Activated T-helper 2 cell treated with anti-CD3 and anti-CD28 coated beads, Interferon-gamma antibody, Interleukin-2, Interleukin-4, amounts not matched to agents 10 μg/mL and 5 μg/mL and 100 μg/mL, durations not matched to agents 14 hours and 24 hours and 36 hours (primary cell): ENCODE measurements at regions of chr10 and their contacts with region 1.

Region 1: GRCh38 chr10:33008499-33009243 is 50.6 kb upstream of the ITGB1 start:
- DNase-seq: peak; percentile 45
- H3K4me3 Mint-ChIP-seq: peak overlapping the region; percentile 67
- H3K27ac Mint-ChIP-seq: peak overlapping the region; percentile 50
- H3K4me1 Mint-ChIP-seq: peaks cover 30% of the 10 kb centered on the region
- H3K27me3 Mint-ChIP-seq: peaks cover 1% of the 10 kb centered on the region

Region 2: DNA sequence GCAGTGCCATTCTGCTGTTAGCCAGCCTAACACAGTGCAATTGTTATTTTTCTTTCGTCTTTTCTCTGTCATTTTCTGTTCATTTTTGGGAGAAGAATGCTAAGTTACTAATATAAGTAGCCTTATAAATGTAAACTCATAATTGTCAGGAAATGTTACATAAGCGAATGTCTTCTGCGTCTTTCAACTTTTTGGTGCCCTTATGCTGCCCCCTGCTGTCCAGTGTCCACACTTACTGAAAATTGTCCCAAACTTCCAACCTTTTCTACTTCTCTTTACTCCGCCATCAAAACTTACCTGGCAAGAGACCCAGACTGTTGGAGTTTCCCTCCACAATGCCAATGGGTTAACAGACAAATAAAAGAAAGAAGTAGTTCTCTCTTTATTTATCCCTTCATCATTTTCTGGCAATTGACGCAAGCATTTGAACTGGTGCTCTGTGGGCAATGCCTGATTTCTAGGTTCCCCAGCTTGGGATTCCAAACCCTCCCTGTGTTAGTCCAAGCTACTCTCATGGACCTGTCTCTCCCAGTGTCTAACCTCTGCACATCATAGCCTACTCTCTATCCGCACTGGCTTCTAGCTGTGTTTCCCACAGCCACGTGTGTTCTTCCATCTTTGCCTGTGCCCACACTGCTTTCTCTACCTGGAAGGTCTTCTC is 640.7 kb before region 1 on chr10:
- intact Hi-C with region 1: loop called (anchors 5 kb)
- DNase-seq: peak; percentile 58
- H3K4me3 Mint-ChIP-seq: no peak overlapping the region
- H3K27ac Mint-ChIP-seq: no peak overlapping the region
- H3K4me1 Mint-ChIP-seq: peaks cover 22% of the 10 kb centered on the region
- H3K27me3 Mint-ChIP-seq: no peaks in the 10 kb centered on the region

Region 3: GRCh38 chr10:32795598-32796183 is 213.0 kb before region 1 on chr10:
- intact Hi-C with region 1: loop called (anchors 1 kb)
- DNase-seq: no peak
- H3K4me3 Mint-ChIP-seq: no peak overlapping the region
- H3K27ac Mint-ChIP-seq: no peak overlapping the region
- H3K4me1 Mint-ChIP-seq: no peaks in the 10 kb centered on the region
- H3K27me3 Mint-ChIP-seq: peaks cover 7% of the 10 kb centered on the region

Region 4: GRCh38 chr10:32958085-32959005 is 50.3 kb before region 1 on chr10 and contains the start of gene ITGB1:
- intact Hi-C with region 1: loop called (anchors 1 kb)
- DNase-seq: peak; percentile 79
- H3K4me3 Mint-ChIP-seq: peak within 1 kb of the TSS; percentile 81
- H3K27ac Mint-ChIP-seq: peak within 1 kb of the TSS; percentile 90
- H3K4me1 Mint-ChIP-seq: peaks cover 45% of the 10 kb centered on the region
- H3K27me3 Mint-ChIP-seq: no peaks in the 10 kb centered on the region
- total RNA-seq, gene ITGB1: 77.8 and 78.7 TPM in 2 replicates

Region 5: GRCh38 chr10:32980558-32981468 is 27.9 kb before region 1 on chr10:
- intact Hi-C with region 1: loop called (anchors 2 kb)
- DNase-seq: peak; percentile 77
- H3K4me3 Mint-ChIP-seq: peak overlapping the region; percentile 85
- H3K27ac Mint-ChIP-seq: peak overlapping the region; percentile 88
- H3K4me1 Mint-ChIP-seq: peaks cover 28% of the 10 kb centered on the region
- H3K27me3 Mint-ChIP-seq: peaks cover 3% of the 10 kb centered on the region

Region 6: GRCh38 chr10:33025039-33025438 is 16.4 kb after region 1 on chr10:
- intact Hi-C with region 1: no loop called
- DNase-seq: no peak
- H3K4me3 Mint-ChIP-seq: no peak overlapping the region
- H3K27ac Mint-ChIP-seq: no peak overlapping the region
- H3K4me1 Mint-ChIP-seq: peaks cover 4% of the 10 kb centered on the region
- H3K27me3 Mint-ChIP-seq: peaks cover 12% of the 10 kb centered on the region

Region 7: DNA sequence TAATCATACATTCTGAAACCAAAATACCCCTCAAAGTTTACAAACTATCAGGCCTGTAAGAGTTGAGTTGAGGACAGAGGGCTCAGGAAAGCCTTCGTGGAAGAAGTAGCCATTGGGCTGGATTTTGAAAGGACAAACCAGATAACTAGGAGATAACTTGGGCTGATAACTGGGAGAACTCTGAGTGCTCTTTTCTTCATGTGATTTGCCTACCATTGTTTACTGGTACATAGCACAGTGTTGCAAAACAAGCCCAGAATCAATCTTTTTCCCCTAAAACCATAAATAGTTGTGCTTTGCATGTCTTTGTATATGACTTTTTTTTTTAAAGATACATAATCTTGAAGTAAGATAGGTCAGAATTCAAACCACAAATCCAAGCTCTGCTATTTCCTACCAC is 56.0 kb after region 1 on chr10:
- intact Hi-C with region 1: no loop called
- DNase-seq: no peak
- H3K4me3 Mint-ChIP-seq: no peak overlapping the region
- H3K27ac Mint-ChIP-seq: no peak overlapping the region
- H3K4me1 Mint-ChIP-seq: peaks cover 3% of the 10 kb centered on the region
- H3K27me3 Mint-ChIP-seq: no peaks in the 10 kb centered on the region

Region 8: DNA sequence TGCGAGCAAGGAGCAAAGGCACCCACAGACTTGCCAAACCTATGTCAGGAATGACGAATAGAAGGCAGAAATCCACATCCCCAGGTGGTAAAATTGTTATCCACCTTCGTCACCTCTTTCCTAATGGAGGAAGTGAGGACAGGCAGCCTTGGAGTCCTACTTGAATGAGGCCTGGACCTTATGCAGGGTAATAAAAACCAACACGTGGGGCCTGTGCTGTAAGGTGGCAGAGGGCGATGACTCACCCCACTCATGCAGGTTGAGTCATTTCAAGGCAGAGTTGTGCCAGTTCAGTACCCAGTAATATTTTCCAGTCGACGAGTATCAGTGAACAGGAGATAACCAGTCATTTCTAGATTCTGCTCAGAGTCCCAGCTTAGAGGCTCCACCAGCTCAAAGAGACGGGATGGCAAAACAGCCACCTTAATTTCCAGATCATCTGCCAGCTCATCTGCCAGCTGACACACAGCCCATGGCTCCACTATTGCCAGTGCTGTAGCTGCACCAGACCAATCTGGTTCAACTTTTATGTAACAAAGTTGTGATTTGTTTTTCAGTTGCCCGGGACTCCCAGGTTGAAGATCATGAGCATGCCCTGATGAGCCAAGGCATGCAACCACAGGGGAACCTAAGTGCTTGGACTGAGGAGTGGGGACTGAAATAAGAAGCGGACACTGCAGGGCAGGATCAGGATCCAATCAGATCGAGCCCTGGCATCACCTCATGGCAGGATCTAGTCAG is 125.5 kb after region 1 on chr10:
- intact Hi-C with region 1: loop called (anchors 2 kb)
- DNase-seq: peak; percentile 64
- H3K4me3 Mint-ChIP-seq: peak overlapping the region; percentile 18
- H3K27ac Mint-ChIP-seq: peak overlapping the region; percentile 84
- H3K4me1 Mint-ChIP-seq: peaks cover 65% of the 10 kb centered on the region
- H3K27me3 Mint-ChIP-seq: no peaks in the 10 kb centered on the region

Region 9: GRCh38 chr10:33155720-33156638 is 147.3 kb after region 1 on chr10:
- intact Hi-C with region 1: loop called (anchors 1 kb)
- DNase-seq: no peak
- H3K4me3 Mint-ChIP-seq: no peak overlapping the region
- H3K27ac Mint-ChIP-seq: peak overlapping the region; percentile 44
- H3K4me1 Mint-ChIP-seq: peaks cover 43% of the 10 kb centered on the region
- H3K27me3 Mint-ChIP-seq: no peaks in the 10 kb centered on the region